Mammary epithelial cell (primary cell): ENCODE measurements at regions of chr5 and their contacts with region 1.

Region 1: DNA sequence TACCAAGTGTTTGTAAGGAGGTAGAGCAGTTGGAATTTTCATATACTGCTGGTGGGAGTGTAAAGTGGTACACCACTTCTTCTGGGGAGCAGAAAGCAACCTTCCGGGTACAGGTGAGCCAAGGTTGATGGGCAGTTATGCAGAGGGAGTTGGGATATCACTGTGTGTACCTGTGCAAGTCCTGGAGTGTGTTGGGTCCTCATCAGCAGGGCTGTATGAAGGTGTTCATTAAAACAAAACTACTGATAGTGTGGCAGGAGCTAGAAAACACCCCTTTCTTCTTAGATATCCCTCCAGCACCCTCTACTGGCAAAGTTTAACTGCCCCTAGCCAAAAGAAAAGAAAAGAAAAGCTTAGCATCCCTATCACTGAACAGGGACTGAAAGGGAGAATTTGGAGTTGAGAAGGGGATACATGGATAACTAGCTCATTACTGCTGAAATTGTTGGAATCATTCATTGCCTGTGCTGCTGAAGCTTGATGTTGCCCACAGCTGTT is 10.7 kb downstream of the MARCHF6 start:
- DNase-seq: peak; percentile 41
- H3K4me3 ChIP-seq: no peak overlapping the region
- H3K27ac ChIP-seq: no peak overlapping the region
- H3K4me1 ChIP-seq: peaks cover 19% of the 10 kb centered on the region
- H3K27me3 ChIP-seq: no peaks in the 10 kb centered on the region
- CTCF ChIP-seq: peak; percentile 49 to 63

Region 2: DNA sequence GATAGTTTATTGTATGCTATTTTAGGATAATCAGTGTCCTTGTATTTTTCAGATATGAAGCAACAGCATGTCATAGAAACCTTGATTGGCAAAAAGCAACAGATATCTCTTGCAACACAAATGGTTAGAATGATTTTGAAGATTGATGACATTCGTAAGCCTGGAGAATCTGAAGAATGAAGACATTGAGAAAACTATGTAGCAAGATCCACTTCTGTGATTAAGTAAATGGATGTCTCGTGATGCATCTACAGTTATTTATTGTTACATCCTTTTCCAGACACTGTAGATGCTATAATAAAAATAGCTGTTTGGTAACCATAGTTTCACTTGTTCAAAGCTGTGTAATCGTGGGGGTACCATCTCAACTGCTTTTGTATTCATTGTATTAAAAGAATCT is 99.6 kb before region 1 on chr5:
- CTCF ChIA-PET with region 1: no interaction called
- dilution Hi-C with region 1: loop called (anchors 5 kb)
- in situ Hi-C with region 1: no loop called
- intact Hi-C with region 1: no loop called
- DNase-seq: no peak
- H3K4me3 ChIP-seq: no peak overlapping the region
- H3K27ac ChIP-seq: no peak overlapping the region
- H3K4me1 ChIP-seq: peaks cover 8% of the 10 kb centered on the region
- H3K27me3 ChIP-seq: no peaks in the 10 kb centered on the region
- CTCF ChIP-seq: no peak